ENCODE measurements at regions of chr2 and their contacts with region 1.

Region 1: GRCh38 chr2:231241755-231242507 is 43.5 kb downstream of the ARMC9 start:
- DNase-seq: peak; percentile 47 to 69 (median 63)
- H3K4me3 ChIP-seq: no peak overlapping the region
- H3K27ac ChIP-seq: peak overlapping the region in 1 of 2 donors; percentile 63
- H3K4me1 ChIP-seq: peaks cover 5% of the 10 kb centered on the region
- H3K27me3 ChIP-seq: no peaks in the 10 kb centered on the region
- CTCF ChIP-seq: no peak
- EP300 ChIP-seq: no peak
- POLR2A ChIP-seq: no peak

Region 2: GRCh38 chr2:231270221-231271114 is 28.5 kb after region 1 on chr2:
- intact Hi-C with region 1: loop called in 1 of 4 experiments (anchors 2 kb)
- DNase-seq: peak; percentile 70 to 80 (median 74)
- H3K4me3 ChIP-seq: peak overlapping the region; percentile 12
- H3K27ac ChIP-seq: peak overlapping the region; percentile 87 to 91
- H3K4me1 ChIP-seq: peaks cover 8% of the 10 kb centered on the region
- H3K27me3 ChIP-seq: no peaks in the 10 kb centered on the region
- CTCF ChIP-seq: peak in 1 of 3 donors; percentile 17
- EP300 ChIP-seq: no peak
- POLR2A ChIP-seq: no peak